Ascending aorta (tissue), 2 donors: ENCODE measurements at regions of chr2 and their contacts with region 1.

Region 1: DNA sequence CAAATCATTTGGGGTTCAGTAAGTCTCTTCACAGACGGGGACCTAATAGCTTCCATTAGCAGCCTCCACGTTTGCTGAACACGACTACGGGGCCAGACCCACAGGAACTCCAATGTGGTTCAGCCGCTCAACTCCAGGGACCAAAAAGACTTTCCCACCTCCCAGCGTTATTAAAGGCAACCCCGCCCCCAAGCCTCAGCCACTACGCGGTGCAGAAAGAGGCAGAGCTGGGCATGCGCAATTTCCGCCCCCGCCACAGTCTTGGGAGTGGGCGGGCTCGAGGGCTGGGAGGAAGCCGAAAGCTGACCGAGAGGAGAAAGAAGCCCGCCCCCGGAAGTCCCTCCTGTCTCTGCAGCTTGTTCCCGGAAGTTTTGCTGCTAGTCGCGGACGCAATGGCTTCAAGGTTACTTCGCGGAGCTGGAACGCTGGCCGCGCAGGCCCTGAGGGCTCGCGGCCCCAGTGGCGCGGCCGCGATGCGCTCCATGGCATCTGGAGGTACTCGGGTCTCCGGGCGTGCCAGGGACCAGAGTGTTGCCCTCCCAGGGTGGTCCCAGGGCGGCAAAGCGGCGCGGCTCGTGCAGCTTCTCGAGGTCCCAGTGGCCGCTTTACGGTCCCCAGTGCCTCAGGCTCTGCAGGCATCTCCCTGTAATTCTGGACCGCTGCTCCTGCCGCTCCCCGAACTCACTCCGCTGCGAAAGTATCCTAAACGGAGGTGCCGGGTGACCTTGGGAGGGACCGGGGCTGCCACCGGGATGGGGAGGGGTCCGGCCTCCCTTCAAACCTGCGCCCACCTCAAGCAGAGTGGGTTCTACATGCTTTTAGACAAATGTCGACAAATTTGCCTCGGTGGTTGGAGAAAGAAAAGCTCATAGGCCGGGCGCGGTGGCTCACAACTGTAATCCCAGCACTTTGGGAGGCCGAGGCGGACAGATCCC is at the start of gene COX5B:
- DNase-seq: peak; percentile 96 to 99
- H3K4me3 ChIP-seq: peak within 1 kb of the TSS; percentile 87 to 92
- H3K27ac ChIP-seq: peak within 1 kb of the TSS; percentile 96 to 98
- H3K4me1 ChIP-seq: peaks cover 3 to 9% of the 10 kb centered on the region in 2 donors
- H3K27me3 ChIP-seq: no peaks in the 10 kb centered on the region
- CTCF ChIP-seq: no peak
- total RNA-seq, gene COX5B: 251 TPM

Region 2: GRCh38 chr2:97697252-97698235 is 51.6 kb after region 1 on chr2:
- intact Hi-C with region 1: loop called (anchors 5 kb)
- DNase-seq: peak; percentile 28 to 95
- H3K4me3 ChIP-seq: no peak overlapping the region
- H3K27ac ChIP-seq: no peak overlapping the region
- H3K4me1 ChIP-seq: peaks cover 0 to 2% of the 10 kb centered on the region in 2 donors
- H3K27me3 ChIP-seq: no peaks in the 10 kb centered on the region
- CTCF ChIP-seq: peak; percentile 82 to 92 (median 91)

Region 3: DNA sequence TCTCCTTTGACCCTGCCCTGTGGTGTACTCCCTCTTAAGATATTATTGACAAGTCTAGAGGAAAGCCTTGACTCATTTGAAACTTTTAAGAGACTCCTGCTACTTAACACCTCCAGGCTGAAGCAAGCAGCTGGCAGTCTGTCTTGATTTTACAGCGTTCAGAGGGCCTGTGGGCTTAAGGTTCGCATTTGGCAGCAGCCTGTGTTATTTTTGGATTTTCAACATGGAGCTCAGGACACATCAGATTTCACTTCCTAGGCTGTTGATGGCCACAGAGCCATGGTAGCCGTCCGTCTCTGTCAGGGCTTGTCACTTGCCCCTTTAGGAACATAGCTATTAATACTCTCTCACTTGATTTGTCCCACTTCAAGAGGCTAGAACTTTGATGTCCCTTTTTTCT is 514.6 kb after region 1 on chr2:
- intact Hi-C with region 1: loop called (anchors 5 kb)
- DNase-seq: peak in 1 of 2 donors; percentile 69
- H3K4me3 ChIP-seq: no peak overlapping the region
- H3K27ac ChIP-seq: peak overlapping the region; percentile 79 to 83
- H3K4me1 ChIP-seq: peaks cover 31 to 44% of the 10 kb centered on the region in 2 donors
- H3K27me3 ChIP-seq: no peaks in the 10 kb centered on the region
- CTCF ChIP-seq: no peak